Dendritic cell treated with granulocyte-macrophage colony-stimulating factor and Interleukin-4, amounts not matched to agents 40 ng/mL and 50 ng/mL, for 4 days (primary cell): ENCODE measurements at regions of chr11 and their contacts with region 1.

Region 1: GRCh38 chr11:35237860-35238715 is 99.1 kb downstream of the CD44 start:
- H3K4me3 Mint-ChIP-seq: no peak overlapping the region
- H3K27ac Mint-ChIP-seq: peak overlapping the region; percentile 91
- H3K4me1 Mint-ChIP-seq: peaks cover 78% of the 10 kb centered on the region
- H3K27me3 Mint-ChIP-seq: no peaks in the 10 kb centered on the region

Region 2: DNA sequence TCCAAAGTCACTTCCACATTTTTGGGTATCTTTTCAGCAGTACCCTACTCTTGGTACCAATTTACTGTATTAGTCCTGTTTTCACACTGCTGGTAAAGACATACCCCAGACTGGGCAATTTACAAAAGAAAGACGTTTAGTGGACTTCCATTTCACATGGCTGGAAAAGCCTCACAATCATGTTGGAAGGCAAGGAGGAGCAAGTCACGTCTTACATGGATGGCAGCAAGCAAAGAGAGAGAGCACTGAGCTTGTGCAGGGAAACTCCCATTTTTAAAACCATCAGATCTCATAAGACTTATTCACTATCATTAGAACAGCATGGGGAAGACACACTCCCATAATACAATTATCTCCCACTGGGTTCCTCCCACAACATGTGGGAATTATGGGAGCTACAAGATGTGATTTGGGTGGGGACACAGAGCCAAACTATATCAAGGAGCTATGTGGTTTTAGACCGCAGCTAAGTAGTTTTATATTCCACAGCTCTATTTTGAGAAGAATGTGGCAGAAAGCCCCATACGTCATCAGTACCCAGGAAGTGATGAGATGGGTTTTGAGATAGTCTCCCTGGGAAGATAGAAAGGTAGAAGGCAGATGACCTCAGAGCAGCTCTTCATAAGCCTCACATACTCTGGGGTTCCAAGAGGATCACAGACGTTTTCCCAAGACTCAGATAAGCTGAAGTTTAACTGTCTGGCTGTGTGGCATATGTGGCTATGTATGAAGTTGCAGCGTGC is 418.2 kb before region 1 on chr11:
- intact Hi-C with region 1: no loop called
- H3K4me3 Mint-ChIP-seq: no peak overlapping the region
- H3K27ac Mint-ChIP-seq: no peak overlapping the region
- H3K4me1 Mint-ChIP-seq: no peaks in the 10 kb centered on the region
- H3K27me3 Mint-ChIP-seq: peaks cover 4% of the 10 kb centered on the region

Region 3: GRCh38 chr11:35304386-35304775 is 66.3 kb after region 1 on chr11:
- intact Hi-C with region 1: loop called (anchors 5 kb)
- H3K4me3 Mint-ChIP-seq: no peak overlapping the region
- H3K27ac Mint-ChIP-seq: peak overlapping the region; percentile 91
- H3K4me1 Mint-ChIP-seq: peaks cover 88% of the 10 kb centered on the region
- H3K27me3 Mint-ChIP-seq: no peaks in the 10 kb centered on the region

Region 4: GRCh38 chr11:35391922-35392813 is 154.1 kb after region 1 on chr11:
- intact Hi-C with region 1: loop called (anchors 5 kb)
- H3K4me3 Mint-ChIP-seq: peak overlapping the region; percentile 51
- H3K27ac Mint-ChIP-seq: peak overlapping the region; percentile 65
- H3K4me1 Mint-ChIP-seq: peaks cover 16% of the 10 kb centered on the region
- H3K27me3 Mint-ChIP-seq: peaks cover 1% of the 10 kb centered on the region